ENCODE measurements at regions of chr4 and their contacts with region 1.

Region 1: DNA sequence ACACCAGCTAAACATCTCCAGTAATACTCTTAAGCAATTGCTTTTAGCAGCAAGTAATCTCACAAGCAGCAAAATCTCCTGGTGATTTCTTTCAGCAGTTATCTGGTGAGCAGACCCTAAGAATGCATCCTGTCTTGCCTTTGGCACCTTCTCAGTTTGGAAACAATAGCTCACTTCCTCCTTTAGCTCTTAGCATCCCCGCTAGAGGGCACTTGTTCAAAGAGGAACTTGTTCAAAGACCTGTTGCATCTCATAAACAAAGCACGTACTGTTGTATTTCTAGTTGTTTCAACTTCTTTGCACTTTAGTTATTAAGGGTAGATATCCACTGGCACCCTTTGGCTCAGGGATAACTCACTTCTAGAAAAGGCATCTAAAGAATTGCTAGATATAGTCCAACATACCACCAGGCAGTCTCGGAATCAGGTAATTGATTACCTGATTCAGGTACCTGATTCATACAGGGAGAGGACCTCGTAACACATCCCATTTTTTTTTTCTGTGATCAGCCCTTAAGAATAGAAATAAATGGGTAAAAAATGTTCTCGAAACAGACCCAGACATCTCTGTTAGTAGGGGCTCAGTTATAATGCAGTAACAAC is 81.9 kb upstream of the QRFPR start:
- DNase-seq: peak; percentile 34
- ATAC-seq: peak; percentile 93
- H3K4me3 Mint-ChIP-seq: no peak overlapping the region
- H3K27ac Mint-ChIP-seq: no peak overlapping the region
- H3K4me1 Mint-ChIP-seq: peaks cover 11% of the 10 kb centered on the region
- H3K27me3 Mint-ChIP-seq: no peaks in the 10 kb centered on the region
- CTCF ChIP-seq: peak; percentile 40

Region 2: GRCh38 chr4:120977435-120977997 is 485.2 kb before region 1 on chr4:
- CTCF ChIA-PET with region 1: no interaction called
- POLR2A ChIA-PET with region 1: no interaction called
- DNase-seq: peak; percentile 14
- ATAC-seq: peak; percentile 98
- H3K4me3 Mint-ChIP-seq: no peak overlapping the region
- H3K27ac Mint-ChIP-seq: no peak overlapping the region
- H3K4me1 Mint-ChIP-seq: no peaks in the 10 kb centered on the region; the same call in 1 of the 2 replicates
- H3K27me3 Mint-ChIP-seq: no peaks in the 10 kb centered on the region
- CTCF ChIP-seq: peak; percentile 20; the same call in 1 of the 2 replicates

Region 3: DNA sequence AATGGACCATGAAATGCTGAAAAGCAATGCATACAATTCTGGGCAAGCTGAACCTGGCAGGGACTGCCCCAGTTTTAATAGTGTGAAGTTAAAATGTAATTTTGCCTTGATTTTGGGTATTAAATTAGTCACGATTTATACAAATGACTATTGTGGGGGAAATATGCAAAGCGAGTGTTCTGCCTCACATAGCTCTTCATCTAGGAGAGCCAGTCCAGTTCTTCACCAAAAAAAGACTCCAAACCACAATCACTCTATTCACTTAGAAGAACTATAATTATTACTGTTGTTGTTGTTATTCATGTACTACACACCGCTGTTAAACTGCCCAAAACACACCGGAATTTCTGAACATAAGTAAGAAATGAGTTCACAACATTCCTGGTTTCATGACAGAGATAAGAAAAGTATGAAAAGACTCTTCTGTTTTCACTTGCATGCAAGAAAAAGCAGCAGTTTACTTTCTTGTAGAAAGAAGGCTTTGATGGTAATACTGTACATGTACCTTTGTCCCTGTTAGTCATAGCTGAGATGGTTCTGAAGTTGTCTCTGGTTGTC is 183.9 kb before region 1 on chr4:
- CTCF ChIA-PET with region 1: no interaction called
- POLR2A ChIA-PET with region 1: no interaction called
- DNase-seq: no peak
- ATAC-seq: no peak
- H3K4me3 Mint-ChIP-seq: no peak overlapping the region
- H3K27ac Mint-ChIP-seq: no peak overlapping the region
- H3K4me1 Mint-ChIP-seq: peaks cover 12% of the 10 kb centered on the region
- H3K27me3 Mint-ChIP-seq: peaks cover 47% of the 10 kb centered on the region
- CTCF ChIP-seq: no peak

Region 4: GRCh38 chr4:121477480-121477879 is 14.7 kb after region 1 on chr4:
- CTCF ChIA-PET with region 1: interaction called, 12 read pairs
- POLR2A ChIA-PET with region 1: no interaction called
- DNase-seq: no peak
- ATAC-seq: no peak
- H3K4me3 Mint-ChIP-seq: no peak overlapping the region
- H3K27ac Mint-ChIP-seq: no peak overlapping the region
- H3K4me1 Mint-ChIP-seq: no peaks in the 10 kb centered on the region
- H3K27me3 Mint-ChIP-seq: no peaks in the 10 kb centered on the region; the same call in 1 of the 2 replicates
- CTCF ChIP-seq: no peak

Region 5: DNA sequence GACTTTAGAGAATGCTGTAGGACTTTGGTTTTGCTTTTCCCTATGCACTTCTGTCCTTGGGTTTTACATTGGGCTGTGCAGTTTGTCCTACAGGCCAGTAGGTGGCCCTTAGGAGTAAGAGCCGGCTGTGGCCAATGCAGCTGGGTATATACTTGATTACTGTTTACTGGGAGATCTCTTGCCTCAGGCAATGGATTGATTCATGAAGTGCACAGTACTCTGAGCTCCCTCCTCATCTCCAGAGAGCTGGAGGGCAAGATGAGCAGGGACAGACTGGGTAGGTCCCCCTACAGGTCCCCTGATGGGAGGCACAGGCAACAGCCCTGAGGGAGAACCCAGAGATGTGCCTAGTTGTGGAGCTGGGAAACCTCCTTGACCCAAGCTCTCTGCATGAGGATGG is 21.9 kb after region 1 on chr4:
- CTCF ChIA-PET with region 1: interaction called, 15 read pairs
- POLR2A ChIA-PET with region 1: no interaction called
- DNase-seq: peak; percentile 38
- ATAC-seq: peak; percentile 99
- H3K4me3 Mint-ChIP-seq: no peak overlapping the region
- H3K27ac Mint-ChIP-seq: no peak overlapping the region
- H3K4me1 Mint-ChIP-seq: no peaks in the 10 kb centered on the region
- H3K27me3 Mint-ChIP-seq: no peaks in the 10 kb centered on the region
- CTCF ChIP-seq: peak; percentile 78

Region 6: GRCh38 chr4:121514443-121514842 is 51.7 kb after region 1 on chr4:
- CTCF ChIA-PET with region 1: interaction called, 26 read pairs
- POLR2A ChIA-PET with region 1: no interaction called
- DNase-seq: peak; percentile 71
- ATAC-seq: peak; percentile 100
- H3K4me3 Mint-ChIP-seq: no peak overlapping the region
- H3K27ac Mint-ChIP-seq: no peak overlapping the region
- H3K4me1 Mint-ChIP-seq: no peaks in the 10 kb centered on the region
- H3K27me3 Mint-ChIP-seq: no peaks in the 10 kb centered on the region
- CTCF ChIP-seq: peak; percentile 70

Region 7: DNA sequence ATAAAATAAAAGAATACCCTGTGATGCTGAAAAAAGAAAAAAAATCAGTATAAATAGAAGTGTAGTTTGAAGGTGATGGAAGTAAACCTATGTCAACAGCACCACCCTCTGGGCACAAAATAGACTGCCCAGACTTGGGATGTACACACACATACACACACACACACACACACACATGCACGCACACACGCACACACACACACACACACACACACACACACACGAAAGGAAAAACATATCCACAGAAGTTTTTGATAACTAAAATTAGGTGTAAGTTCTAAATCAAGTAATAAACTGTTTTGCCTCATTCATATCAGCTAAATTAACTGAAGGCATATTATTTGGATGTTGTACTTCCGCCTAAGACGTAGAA is 193.5 kb after region 1 on chr4:
- CTCF ChIA-PET with region 1: interaction called, 11 read pairs
- POLR2A ChIA-PET with region 1: no interaction called
- DNase-seq: peak; percentile 34
- ATAC-seq: peak; percentile 73
- H3K4me3 Mint-ChIP-seq: no peak overlapping the region
- H3K27ac Mint-ChIP-seq: no peak overlapping the region
- H3K4me1 Mint-ChIP-seq: no peaks in the 10 kb centered on the region
- H3K27me3 Mint-ChIP-seq: no peaks in the 10 kb centered on the region
- CTCF ChIP-seq: no peak

Measured in WTC11 (cell line).